ENCODE measurements at regions of chr7 and their contacts with region 1.

Region 1: DNA sequence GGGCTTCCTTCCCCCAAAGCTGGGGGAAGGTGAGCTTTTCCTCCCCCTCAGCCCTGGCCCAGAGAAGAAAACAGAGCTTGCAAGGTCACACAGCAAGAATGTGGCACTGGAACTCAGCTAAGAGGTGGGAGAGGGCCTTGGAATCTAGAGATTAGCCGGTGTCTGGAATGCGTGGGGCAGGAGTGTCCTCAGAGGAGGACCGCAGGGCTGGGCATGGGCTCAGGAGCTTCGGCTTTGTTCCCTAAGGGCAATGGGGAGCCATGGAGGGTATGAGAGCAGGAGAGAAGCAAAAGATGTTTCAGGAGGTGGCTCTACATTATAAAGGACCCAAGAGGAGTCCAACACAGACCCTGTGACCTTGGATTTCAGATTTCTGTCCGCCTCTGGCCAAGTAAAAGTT is 127.2 kb upstream of the TNRC18 start:
- DNase-seq: no peak
- H3K4me3 ChIP-seq: no peak overlapping the region
- H3K27me3 ChIP-seq: no peaks in the 10 kb centered on the region
- CTCF ChIP-seq: no peak

Region 2: DNA sequence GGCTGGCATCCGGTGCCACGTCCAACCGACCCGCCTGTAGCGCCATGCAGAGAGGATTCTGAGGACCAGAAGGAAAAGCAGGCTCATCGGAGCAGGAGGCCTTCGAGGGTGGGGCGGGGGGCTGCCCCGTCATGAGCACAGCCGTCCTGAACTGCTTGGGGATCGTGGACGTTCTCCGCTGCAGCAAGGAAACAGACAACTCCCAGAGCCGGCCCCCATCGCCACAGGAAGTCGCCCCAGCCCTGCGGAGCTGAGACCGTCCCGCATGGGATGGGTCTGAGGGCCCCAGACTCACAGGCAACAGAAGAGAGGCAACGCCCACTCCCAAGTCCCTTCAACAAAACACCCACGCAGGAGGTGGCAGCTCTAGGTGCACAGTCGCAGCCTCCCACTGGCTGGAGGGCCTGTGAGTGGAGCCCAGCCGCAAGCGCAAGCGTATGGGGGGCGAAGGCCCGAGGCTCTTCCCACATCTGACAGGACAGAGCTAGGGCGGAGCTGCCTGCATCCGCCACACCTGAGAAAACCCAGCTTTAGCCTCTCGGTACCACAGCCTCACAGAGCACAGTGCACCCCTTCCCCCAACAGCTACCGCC is 62.4 kb before region 1 on chr7:
- CTCF ChIA-PET with region 1: no interaction called
- POLR2A ChIA-PET with region 1: no interaction called
- DNase-seq: no peak
- H3K4me3 ChIP-seq: no peak overlapping the region
- H3K27me3 ChIP-seq: no peaks in the 10 kb centered on the region
- CTCF ChIP-seq: no peak

Region 3: GRCh38 chr7:5519515-5519928 is 31.3 kb before region 1 on chr7:
- CTCF ChIA-PET with region 1: no interaction called
- POLR2A ChIA-PET with region 1: interaction called, 11 read pairs
- DNase-seq: no peak
- H3K4me3 ChIP-seq: no peak overlapping the region
- H3K27me3 ChIP-seq: no peaks in the 10 kb centered on the region
- CTCF ChIP-seq: no peak

Region 4: GRCh38 chr7:5567790-5568189 is 17.0 kb after region 1 on chr7:
- CTCF ChIA-PET with region 1: no interaction called
- POLR2A ChIA-PET with region 1: no interaction called
- DNase-seq: no peak
- H3K4me3 ChIP-seq: no peak overlapping the region
- H3K27me3 ChIP-seq: no peaks in the 10 kb centered on the region
- CTCF ChIP-seq: no peak

Region 5: GRCh38 chr7:5780801-5781496 is 230.1 kb after region 1 on chr7:
- CTCF ChIA-PET with region 1: no interaction called
- POLR2A ChIA-PET with region 1: no interaction called
- DNase-seq: no peak
- H3K4me3 ChIP-seq: peak overlapping the region; percentile 74
- H3K27me3 ChIP-seq: no peaks in the 10 kb centered on the region
- CTCF ChIP-seq: no peak